ENCODE measurements at regions of chr1 and their contacts with region 1.

Region 1: DNA sequence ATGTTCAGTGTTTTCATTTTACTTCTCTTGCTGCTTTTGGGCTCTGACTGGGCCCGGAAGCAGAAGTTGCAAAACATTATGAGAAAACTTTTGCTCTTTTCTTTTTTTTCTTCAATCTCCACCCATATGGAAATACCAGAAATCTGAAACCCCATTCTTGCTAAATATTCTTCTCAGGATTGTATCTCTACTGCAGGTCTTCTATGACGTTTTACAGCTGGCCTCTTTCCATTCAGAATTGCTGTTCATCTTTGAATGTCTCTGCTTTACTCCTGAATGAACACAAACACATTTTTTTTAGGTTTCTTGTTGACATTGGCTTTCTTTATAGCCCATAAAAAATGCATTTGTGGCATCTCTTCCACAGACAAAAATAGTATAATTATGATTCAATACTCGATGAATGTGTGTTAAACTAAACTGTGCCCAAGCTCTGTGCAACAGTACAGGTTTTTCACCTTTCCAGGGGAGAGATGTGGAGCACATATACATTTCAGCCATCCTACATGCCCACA is 18.8 kb downstream of the PTPRC start:
- DNase-seq: peak; percentile 100
- H3K4me3 ChIP-seq: no peak overlapping the region
- H3K27me3 ChIP-seq: no peaks in the 10 kb centered on the region
- CTCF ChIP-seq: no peak

Region 2: DNA sequence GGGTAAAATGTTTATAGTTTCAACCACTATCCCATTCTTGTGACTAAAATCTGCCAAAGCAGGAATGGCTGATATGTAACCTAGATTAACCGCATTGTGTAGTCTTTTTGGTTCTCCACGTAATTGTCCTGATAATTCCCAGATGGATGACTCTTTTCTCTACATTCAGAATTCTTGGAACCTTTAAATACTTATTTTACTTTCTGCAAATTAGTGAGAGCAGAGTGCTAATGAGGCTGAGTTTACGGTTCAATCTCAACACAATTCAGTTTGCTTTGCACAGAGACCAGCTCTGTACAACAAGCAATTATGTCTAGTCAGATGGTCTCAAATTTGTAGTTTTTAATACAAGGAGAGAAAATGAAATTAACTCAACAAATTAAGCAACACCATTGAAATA is 1380.4 kb before region 1 on chr1:
- CTCF ChIA-PET with region 1: no interaction called
- POLR2A ChIA-PET with region 1: interaction called, 10 read pairs
- DNase-seq: no peak
- H3K4me3 ChIP-seq: no peak overlapping the region
- H3K27me3 ChIP-seq: no peaks in the 10 kb centered on the region
- CTCF ChIP-seq: no peak

Region 3: GRCh38 chr1:198922638-198923430 is 265.2 kb after region 1 on chr1:
- CTCF ChIA-PET with region 1: no interaction called
- POLR2A ChIA-PET with region 1: no interaction called
- DNase-seq: no peak
- H3K4me3 ChIP-seq: no peak overlapping the region
- H3K27me3 ChIP-seq: no peaks in the 10 kb centered on the region
- CTCF ChIP-seq: no peak

Measured in BJ (cell line).